PC-9 (cell line): ENCODE measurements at regions of chr10 and their contacts with region 1.

Region 1: GRCh38 chr10:5446390-5446926 is 34.1 kb downstream of the NET1 start:
- DNase-seq: peak; percentile 87 to 95
- H3K4me3 ChIP-seq: peak overlapping the region; percentile 91
- H3K27ac ChIP-seq: peak overlapping the region; percentile 95
- H3K4me1 ChIP-seq: peaks cover 38% of the 10 kb centered on the region
- H3K27me3 ChIP-seq: no peaks in the 10 kb centered on the region
- CTCF ChIP-seq: no peak

Region 2: DNA sequence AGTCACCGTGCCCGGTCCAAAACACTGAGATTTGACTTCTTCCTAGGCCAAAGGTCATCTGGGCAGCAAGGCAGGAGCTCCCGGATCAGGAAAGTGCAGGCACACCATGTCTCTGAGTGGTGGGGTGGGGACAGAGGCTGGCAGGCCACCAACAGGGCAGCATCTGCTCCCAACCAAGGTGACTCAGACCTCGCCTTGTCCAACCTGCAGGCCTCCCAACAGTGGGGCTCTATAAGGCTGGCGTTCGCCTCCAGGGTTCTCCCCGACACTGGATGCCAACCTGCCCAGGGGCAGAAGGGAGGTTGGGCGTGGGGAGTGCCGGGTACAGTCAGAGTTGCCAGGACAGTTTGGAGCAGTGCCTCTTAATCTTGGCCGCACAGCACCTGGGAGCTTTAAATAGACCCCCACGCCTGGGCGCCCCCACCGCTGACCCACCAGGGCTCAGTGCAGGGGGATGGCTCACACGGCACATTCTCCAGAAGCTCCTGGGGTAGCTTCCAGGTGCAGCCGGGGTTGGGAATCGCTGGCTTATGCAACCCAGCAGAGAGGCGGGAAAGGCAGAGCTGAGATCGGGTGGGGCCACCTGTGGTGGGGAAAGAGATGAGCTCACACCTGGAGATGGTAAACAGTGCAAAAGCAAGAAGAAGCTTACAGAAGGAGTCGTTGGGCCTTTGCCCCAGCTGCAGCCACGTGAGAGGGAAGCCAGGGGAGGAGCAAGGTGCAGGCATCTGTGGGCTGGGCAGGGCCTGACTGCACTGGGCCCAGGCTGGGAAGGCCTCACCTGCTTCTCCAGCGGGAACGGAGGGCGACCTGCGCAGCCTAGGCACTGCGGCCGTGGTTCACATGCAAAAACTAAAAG is 42.1 kb after region 1 on chr10:
- CTCF ChIA-PET with region 1: no interaction called
- POLR2A ChIA-PET with region 1: interaction called, 6 read pairs
- intact Hi-C with region 1: loop called (anchors 1 kb)
- DNase-seq: peak; percentile 94 to 97
- H3K4me3 ChIP-seq: peak overlapping the region; percentile 45; the same call in 1 of the 2 replicates
- H3K27ac ChIP-seq: peak overlapping the region; percentile 98
- H3K4me1 ChIP-seq: peaks cover 37% of the 10 kb centered on the region
- H3K27me3 ChIP-seq: no peaks in the 10 kb centered on the region
- CTCF ChIP-seq: 0 out of 2 replicates have a peak, but pooled peaks have one; percentile 16

Region 3: GRCh38 chr10:5496261-5497250 is 50.1 kb after region 1 on chr10:
- CTCF ChIA-PET with region 1: no interaction called
- POLR2A ChIA-PET with region 1: no interaction called
- intact Hi-C with region 1: loop called (anchors 1 kb)
- DNase-seq: peak; percentile 80 to 93
- H3K4me3 ChIP-seq: no peak overlapping the region
- H3K27ac ChIP-seq: peak overlapping the region; percentile 66
- H3K4me1 ChIP-seq: peaks cover 79% of the 10 kb centered on the region
- H3K27me3 ChIP-seq: no peaks in the 10 kb centered on the region
- CTCF ChIP-seq: no peak

Region 4: GRCh38 chr10:5623081-5623748 is 176.8 kb after region 1 on chr10:
- CTCF ChIA-PET with region 1: interaction called, 8 read pairs
- POLR2A ChIA-PET with region 1: interaction called, 4 read pairs
- intact Hi-C with region 1: loop called (anchors 1 kb)
- DNase-seq: peak; percentile 83 to 93
- H3K4me3 ChIP-seq: no peak overlapping the region
- H3K27ac ChIP-seq: peak overlapping the region; percentile 77
- H3K4me1 ChIP-seq: peaks cover 20% of the 10 kb centered on the region
- H3K27me3 ChIP-seq: no peaks in the 10 kb centered on the region
- CTCF ChIP-seq: peak; percentile 84

Region 5: DNA sequence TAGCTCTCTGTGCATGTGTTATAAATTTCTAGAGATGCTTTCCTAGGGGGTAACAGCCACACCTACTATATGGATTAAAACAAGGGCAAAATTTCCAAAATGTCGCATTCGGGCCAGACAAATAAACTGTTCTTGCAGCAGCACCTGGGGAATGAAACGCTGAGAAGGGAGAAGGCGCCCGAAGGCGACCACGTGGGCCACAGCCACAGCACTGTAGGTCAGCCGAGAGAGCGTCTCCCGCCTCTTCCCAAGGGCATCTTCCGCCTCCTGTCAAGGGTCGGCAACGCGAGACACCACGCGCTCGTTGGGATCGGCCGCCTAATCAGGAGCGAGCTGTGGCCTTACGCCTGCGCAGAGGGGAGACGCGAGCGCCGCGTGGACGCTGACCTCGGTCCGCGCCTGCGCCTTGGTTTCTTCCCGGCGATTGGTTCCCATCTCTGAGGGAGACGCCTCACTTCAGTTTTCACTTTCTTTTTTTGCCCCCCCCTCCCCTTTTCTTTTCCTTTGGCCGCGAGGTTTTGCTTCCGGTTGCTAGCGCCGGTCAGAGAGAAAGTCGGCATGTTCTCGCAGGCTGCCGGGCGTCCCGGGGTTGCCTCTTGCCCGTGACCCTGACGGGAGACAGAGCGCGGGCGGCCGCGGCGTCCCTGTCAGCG is 238.0 kb after region 1 on chr10 and contains the start of gene TASOR2:
- CTCF ChIA-PET with region 1: no interaction called
- POLR2A ChIA-PET with region 1: interaction called, 6 read pairs
- intact Hi-C with region 1: loop called (anchors 2 kb)
- DNase-seq: peak; percentile 85 to 97
- H3K4me3 ChIP-seq: peak within 1 kb of the TSS; percentile 92
- H3K27ac ChIP-seq: peak within 1 kb of the TSS; percentile 53
- H3K4me1 ChIP-seq: no peaks in the 10 kb centered on the region; the same call in 1 of the 2 replicates
- H3K27me3 ChIP-seq: no peaks in the 10 kb centered on the region
- CTCF ChIP-seq: no peak
- total RNA-seq, gene TASOR2: 41.8 and 60.7 TPM in 2 replicates